CD4-positive, alpha-beta T cell (primary cell): ENCODE measurements at regions of chr22 and their contacts with region 1.

Region 1: DNA sequence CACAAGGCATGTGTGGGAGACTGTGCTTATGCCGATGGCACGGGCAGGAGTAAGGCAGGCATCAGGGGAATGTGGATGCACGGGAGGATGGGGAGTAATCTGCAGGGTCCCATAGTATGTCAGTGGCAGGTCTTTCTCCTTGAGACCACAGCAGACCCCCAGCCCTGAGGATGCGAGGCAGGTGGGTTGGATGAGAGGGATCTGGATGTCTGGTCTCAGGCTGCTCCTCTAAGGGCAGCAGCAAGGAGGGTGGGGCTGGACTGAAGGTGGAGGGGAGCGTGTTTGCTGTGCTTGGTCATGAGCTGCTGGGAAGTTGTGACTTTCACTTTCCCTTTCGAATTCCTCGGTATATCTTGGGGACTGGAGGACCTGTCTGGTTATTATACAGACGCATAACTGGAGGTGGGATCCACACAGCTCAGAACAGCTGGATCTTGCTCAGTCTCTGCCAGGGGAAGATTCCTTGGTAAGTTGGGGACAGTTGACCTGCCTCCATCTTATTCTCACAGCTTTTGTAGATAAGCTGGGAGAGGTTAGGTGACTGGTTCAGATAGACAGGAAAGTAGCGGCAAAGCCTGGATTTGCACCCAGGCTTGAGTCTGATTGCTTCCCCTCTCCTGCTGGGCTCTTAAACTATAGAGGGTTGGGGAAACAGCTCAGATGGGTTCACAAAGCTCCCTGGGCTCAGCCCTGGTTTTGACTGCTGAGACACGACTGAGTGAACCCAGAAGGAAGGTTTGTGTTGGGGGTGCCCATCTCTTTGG is at the start of gene APOL1:
- DNase-seq: peak in 13 of 14 experiments; percentile 8 to 85 (median 35)
- ATAC-seq: peak; percentile 90
- H3K4me3 ChIP-seq: peak within 1 kb of the TSS; percentile 64
- H3K4me3 Mint-ChIP-seq: peak within 1 kb of the TSS; percentile 91
- H3K27ac ChIP-seq: peak within 1 kb of the TSS; percentile 22 to 46
- H3K27ac Mint-ChIP-seq: peak within 1 kb of the TSS; percentile 85
- H3K4me1 ChIP-seq: peaks cover 39% of the 10 kb centered on the region
- H3K4me1 Mint-ChIP-seq: peaks cover 39% of the 10 kb centered on the region
- H3K27me3 ChIP-seq: no peaks in the 10 kb centered on the region
- H3K27me3 Mint-ChIP-seq: no peaks in the 10 kb centered on the region
- CTCF ChIP-seq: no peak
- total RNA-seq, gene APOL1: 6.4 to 7.3 TPM

Region 2: DNA sequence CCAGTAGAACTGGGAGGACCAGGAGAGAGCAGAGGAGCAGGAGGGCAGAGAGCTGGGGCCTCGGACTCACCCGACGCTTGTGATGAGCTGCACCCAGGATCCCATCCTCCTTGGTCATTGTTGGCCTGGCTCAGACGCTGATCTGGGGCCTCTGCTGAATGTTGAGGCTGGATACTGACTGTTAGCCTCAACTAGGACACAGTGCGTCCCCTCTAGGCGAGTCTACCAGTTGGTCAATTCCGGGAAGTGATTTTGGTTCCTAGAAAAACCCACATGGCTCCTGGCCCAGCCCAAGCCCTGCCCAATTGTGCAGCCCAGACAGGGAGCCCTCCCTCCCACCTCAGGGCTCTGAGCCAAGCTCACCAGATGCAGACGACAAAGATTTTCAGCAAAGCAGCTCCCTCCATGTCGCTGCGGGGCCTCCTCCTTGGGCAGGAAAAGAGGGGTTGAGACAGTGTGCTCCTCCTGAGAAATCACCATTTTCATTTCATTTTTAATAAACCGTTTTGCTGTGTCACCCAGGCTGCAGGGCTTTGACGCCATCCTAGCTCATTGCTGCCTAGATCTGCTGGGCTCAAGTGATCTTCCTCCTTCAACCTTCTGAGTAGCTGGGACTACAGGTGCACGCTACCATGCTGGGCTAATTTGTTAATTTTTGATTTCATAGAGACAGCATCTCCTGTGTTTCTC is 51.2 kb before region 1 on chr22 and contains the start of gene APOL4:
- CTCF ChIA-PET with region 1: no interaction called
- POLR2A ChIA-PET with region 1: no interaction called
- intact Hi-C with region 1: loop called in 1 of 2 experiments (anchors 2 kb)
- DNase-seq: peak in 1 of 14 experiments; percentile 6
- ATAC-seq: no peak
- H3K4me3 ChIP-seq: no peak within 1 kb of the TSS
- H3K4me3 Mint-ChIP-seq: no peak within 1 kb of the TSS
- H3K27ac ChIP-seq: no peak within 1 kb of the TSS
- H3K27ac Mint-ChIP-seq: no peak within 1 kb of the TSS
- H3K4me1 ChIP-seq: peaks cover 8% of the 10 kb centered on the region
- H3K4me1 Mint-ChIP-seq: peaks cover 6% of the 10 kb centered on the region
- H3K27me3 ChIP-seq: no peaks in the 10 kb centered on the region
- H3K27me3 Mint-ChIP-seq: peaks cover 27% of the 10 kb centered on the region
- CTCF ChIP-seq: no peak
- total RNA-seq, gene APOL4: not detected

Region 3: GRCh38 chr22:36239401-36240171 is 13.3 kb before region 1 on chr22 and contains the start of gene APOL2:
- CTCF ChIA-PET with region 1: interaction called, 7 read pairs
- POLR2A ChIA-PET with region 1: interaction called, 21 read pairs
- intact Hi-C with region 1: no loop called
- DNase-seq: peak; percentile 69 to 94 (median 84)
- ATAC-seq: peak; percentile 98
- H3K4me3 ChIP-seq: peak within 1 kb of the TSS; percentile 89
- H3K4me3 Mint-ChIP-seq: peak within 1 kb of the TSS; percentile 87
- H3K27ac ChIP-seq: peak within 1 kb of the TSS; percentile 67 to 79
- H3K27ac Mint-ChIP-seq: peak within 1 kb of the TSS; percentile 90
- H3K4me1 ChIP-seq: peaks cover 47% of the 10 kb centered on the region
- H3K4me1 Mint-ChIP-seq: peaks cover 49% of the 10 kb centered on the region
- H3K27me3 ChIP-seq: no peaks in the 10 kb centered on the region
- H3K27me3 Mint-ChIP-seq: no peaks in the 10 kb centered on the region
- CTCF ChIP-seq: peak; percentile 60
- total RNA-seq, gene APOL2: 17.8 to 21.8 TPM

Region 4: GRCh38 chr22:36368359-36368983 is 115.5 kb after region 1 on chr22:
- CTCF ChIA-PET with region 1: no interaction called
- POLR2A ChIA-PET with region 1: no interaction called
- intact Hi-C with region 1: no loop called
- DNase-seq: peak in 3 of 14 experiments; percentile 54 to 71 (median 65)
- ATAC-seq: no peak
- H3K4me3 ChIP-seq: peak overlapping the region; percentile 39
- H3K4me3 Mint-ChIP-seq: peak overlapping the region; percentile 88
- H3K27ac ChIP-seq: peak overlapping the region; percentile 63 to 87
- H3K27ac Mint-ChIP-seq: peak overlapping the region; percentile 93
- H3K4me1 ChIP-seq: peaks cover 99% of the 10 kb centered on the region
- H3K4me1 Mint-ChIP-seq: peaks cover 98% of the 10 kb centered on the region
- H3K27me3 ChIP-seq: no peaks in the 10 kb centered on the region
- H3K27me3 Mint-ChIP-seq: no peaks in the 10 kb centered on the region
- CTCF ChIP-seq: peak; percentile 29